Mammary epithelial cell (primary cell): ENCODE measurements at regions of chr4 and their contacts with region 1.

Region 1: GRCh38 chr4:156475322-156475721 is 496.3 kb downstream of the PDGFC start:
- DNase-seq: peak; percentile 64
- H3K4me3 ChIP-seq: no peak overlapping the region
- H3K27ac ChIP-seq: peak overlapping the region; percentile 86
- H3K4me1 ChIP-seq: peaks cover 17% of the 10 kb centered on the region
- H3K27me3 ChIP-seq: no peaks in the 10 kb centered on the region
- CTCF ChIP-seq: peak; percentile 62 to 66

Region 2: DNA sequence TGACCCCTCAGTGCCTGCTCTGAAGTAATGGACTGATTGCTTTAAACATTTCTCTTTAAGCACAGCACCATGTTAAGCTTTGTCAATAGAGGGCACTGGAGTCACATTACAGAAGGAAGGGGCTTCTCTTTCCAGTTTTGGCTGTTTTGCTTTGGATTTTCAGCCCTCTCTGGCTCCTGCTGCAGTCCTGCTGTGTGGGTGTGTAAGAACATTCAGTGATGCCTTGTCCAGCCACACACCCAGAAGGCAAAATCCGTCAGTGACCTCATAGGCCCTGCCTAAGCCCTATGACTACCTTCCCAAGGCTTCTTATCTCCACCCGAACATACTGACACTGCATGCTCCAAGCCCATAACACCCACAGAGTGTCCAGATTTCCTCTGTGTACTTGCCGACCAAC is 306.3 kb before region 1 on chr4:
- CTCF ChIA-PET with region 1: no interaction called
- dilution Hi-C with region 1: no loop called
- in situ Hi-C with region 1: no loop called
- intact Hi-C with region 1: loop called (anchors 2 kb)
- DNase-seq: peak; percentile 80
- H3K4me3 ChIP-seq: no peak overlapping the region
- H3K27ac ChIP-seq: no peak overlapping the region
- H3K4me1 ChIP-seq: peaks cover 7% of the 10 kb centered on the region
- H3K27me3 ChIP-seq: no peaks in the 10 kb centered on the region
- CTCF ChIP-seq: peak; percentile 63 to 67

Region 3: GRCh38 chr4:156771171-156771837 is 296.0 kb after region 1 on chr4:
- CTCF ChIA-PET with region 1: no interaction called
- dilution Hi-C with region 1: no loop called
- in situ Hi-C with region 1: loop called in 1 of 2 experiments (anchors 10 kb)
- intact Hi-C with region 1: loop called (anchors 2 kb)
- DNase-seq: peak; percentile 99
- H3K4me3 ChIP-seq: peak overlapping the region; percentile 13 to 36 (median 18)
- H3K27ac ChIP-seq: peak overlapping the region; percentile 93
- H3K4me1 ChIP-seq: peaks cover 45% of the 10 kb centered on the region
- H3K27me3 ChIP-seq: no peaks in the 10 kb centered on the region
- CTCF ChIP-seq: no peak

Region 4: GRCh38 chr4:156968479-156968984 is 493.2 kb after region 1 on chr4:
- CTCF ChIA-PET with region 1: interaction called, 4 read pairs
- dilution Hi-C with region 1: no loop called
- in situ Hi-C with region 1: loop called in 1 of 2 experiments (anchors 5 kb)
- intact Hi-C with region 1: loop called (anchors 1 kb)
- DNase-seq: peak; percentile 72
- H3K4me3 ChIP-seq: peak overlapping the region; percentile 60 to 90 (median 77)
- H3K27ac ChIP-seq: no peak overlapping the region
- H3K4me1 ChIP-seq: peaks cover 30% of the 10 kb centered on the region
- H3K27me3 ChIP-seq: no peaks in the 10 kb centered on the region
- CTCF ChIP-seq: peak; percentile 78 to 81

Region 5: DNA sequence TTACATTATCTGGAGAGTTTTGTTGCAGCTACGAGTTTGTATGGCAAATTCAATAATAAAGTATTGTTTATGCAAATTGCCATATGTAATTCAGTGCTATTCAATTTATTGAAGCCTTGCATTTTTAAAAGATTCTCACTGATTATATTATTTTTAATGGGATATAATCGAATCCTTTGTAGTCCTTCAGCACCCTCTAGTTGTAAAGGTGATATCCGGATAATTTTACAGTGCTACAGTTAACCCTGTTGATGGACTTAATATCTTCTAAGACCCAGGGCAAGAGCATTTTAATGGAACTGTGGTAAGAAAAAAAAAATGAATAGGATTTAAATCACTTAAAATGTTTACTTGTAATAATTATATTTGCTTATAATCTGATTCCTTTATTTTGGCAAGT is 696.7 kb after region 1 on chr4:
- CTCF ChIA-PET with region 1: no interaction called
- dilution Hi-C with region 1: no loop called
- in situ Hi-C with region 1: no loop called
- intact Hi-C with region 1: loop called (anchors 1 kb)
- DNase-seq: no peak
- H3K4me3 ChIP-seq: no peak overlapping the region
- H3K27ac ChIP-seq: no peak overlapping the region
- H3K4me1 ChIP-seq: no peaks in the 10 kb centered on the region
- H3K27me3 ChIP-seq: no peaks in the 10 kb centered on the region
- CTCF ChIP-seq: peak; percentile 19 to 42